ENCODE measurements at regions of chr13 and their contacts with region 1.

Region 1: DNA sequence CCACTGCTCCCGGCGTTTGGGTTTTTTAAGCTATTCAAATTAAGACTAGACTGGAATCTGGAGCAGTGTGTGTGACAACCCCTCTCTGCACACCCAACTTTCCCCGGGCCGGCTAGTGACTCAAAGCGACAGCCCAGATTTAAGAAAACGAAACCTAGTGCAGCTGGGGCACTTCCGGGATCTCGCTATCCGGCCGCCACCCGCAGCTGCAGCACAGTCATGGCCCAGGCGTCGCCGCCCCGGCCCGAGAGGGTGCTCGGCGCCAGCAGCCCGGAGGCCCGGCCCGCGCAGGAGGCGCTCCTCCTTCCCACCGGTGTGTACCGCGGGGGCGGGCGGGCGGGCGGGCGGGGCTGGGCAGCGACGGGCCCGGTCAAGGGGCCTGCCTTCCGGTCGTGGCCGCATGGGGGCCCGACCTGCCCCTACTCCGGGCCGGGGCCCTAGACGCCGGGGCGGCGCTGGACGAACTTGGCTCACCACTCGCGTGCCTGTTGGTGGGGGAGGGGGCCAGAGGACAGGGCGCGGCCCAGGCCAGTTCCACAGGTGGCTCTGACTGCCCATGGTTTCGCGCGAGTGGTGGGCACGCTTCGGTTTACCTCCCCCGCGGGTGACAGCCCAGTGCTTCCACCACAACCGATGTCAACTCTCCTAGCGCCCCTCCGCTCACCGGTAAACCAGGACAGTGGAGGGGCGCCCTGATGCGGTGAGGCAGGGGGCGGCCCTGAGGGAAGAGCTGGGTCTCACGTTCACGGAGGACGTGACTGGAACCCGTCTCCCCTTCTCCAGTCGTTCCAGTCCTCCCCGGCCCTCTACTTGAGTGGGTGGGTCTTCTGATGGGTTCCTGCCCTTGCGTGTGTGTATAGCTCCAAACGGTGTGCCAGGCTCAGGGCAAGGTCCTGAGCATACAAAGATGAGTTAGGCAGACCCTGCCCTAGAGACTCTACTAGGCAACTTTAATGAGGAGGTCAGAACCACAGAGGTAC is at the start of gene PHF11:
- DNase-seq: peak; percentile 45 to 92
- H3K4me3 ChIP-seq: peak within 1 kb of the TSS; percentile 71 to 74
- H3K27ac ChIP-seq: peak within 1 kb of the TSS; percentile 95 to 99
- H3K4me1 ChIP-seq: peaks cover 0 to 3% of the 10 kb centered on the region in 2 donors
- H3K27me3 ChIP-seq: no peaks in the 10 kb centered on the region
- CTCF ChIP-seq: peak in 1 of 3 experiments; percentile 3
- total RNA-seq, gene PHF11: 57.4 TPM

Region 2: GRCh38 chr13:49308089-49308875 is 187.8 kb before region 1 on chr13:
- intact Hi-C with region 1: loop called (anchors 5 kb)
- DNase-seq: peak; percentile 58 to 94
- H3K4me3 ChIP-seq: peak overlapping the region; percentile 16 to 21
- H3K27ac ChIP-seq: peak overlapping the region; percentile 92 to 95
- H3K4me1 ChIP-seq: peaks cover 6 to 34% of the 10 kb centered on the region in 2 donors
- H3K27me3 ChIP-seq: no peaks in the 10 kb centered on the region
- CTCF ChIP-seq: peak in 1 of 3 experiments; percentile 6

Region 3: DNA sequence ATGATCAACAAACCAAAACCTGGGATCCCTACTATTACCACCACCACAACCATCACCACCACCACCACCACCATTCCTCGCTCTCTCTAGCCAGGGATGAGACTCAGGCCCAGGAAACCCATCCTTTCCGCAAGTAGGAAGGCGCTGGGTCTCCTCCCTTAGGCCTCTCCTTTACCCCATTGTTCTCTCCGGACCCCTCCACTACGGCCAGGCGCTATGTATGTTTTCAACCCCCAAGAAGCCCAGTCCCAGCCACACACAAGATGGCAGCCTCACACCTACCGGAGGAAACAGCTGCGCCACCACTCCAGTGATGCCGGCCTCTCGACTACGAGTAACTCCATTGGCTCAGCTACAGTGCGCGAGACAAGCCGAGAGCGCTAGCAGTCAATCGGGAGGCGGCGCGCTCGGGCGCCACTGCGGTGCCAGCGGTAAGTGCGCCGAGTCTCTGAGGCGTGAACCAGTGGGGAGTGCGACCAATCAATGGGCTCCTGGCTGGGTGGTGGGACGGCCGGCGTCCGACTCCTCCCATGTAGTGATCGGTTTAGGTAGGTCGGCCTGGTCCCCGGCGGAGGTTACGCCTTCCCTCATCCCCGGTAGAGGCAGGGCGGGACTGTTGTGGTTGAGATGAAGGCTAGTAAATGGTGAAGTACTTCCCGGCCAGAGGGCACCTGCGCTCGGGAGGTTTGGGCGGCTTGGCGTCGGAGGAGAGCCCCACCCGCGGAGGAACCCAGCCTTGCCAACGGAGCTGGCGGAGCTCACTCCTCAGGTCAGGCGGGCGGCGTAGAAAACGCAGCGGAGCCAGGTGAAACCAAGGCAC is 52.2 kb before region 1 on chr13 and contains the starts of genes CAB39L and SETDB2:
- intact Hi-C with region 1: loop called (anchors 1 kb)
- DNase-seq: peak; percentile 99 to 100
- H3K4me3 ChIP-seq: peak within 1 kb of the TSS; percentile 75 to 84
- H3K27ac ChIP-seq: peak within 1 kb of the TSS; percentile 96 to 99
- H3K4me1 ChIP-seq: peaks cover 2 to 20% of the 10 kb centered on the region in 2 donors
- H3K27me3 ChIP-seq: no peaks in the 10 kb centered on the region
- CTCF ChIP-seq: peak; percentile 26 to 45 (median 42)
- total RNA-seq, gene CAB39L: 30.1 TPM
- total RNA-seq, gene SETDB2: 7.2 TPM

Region 4: DNA sequence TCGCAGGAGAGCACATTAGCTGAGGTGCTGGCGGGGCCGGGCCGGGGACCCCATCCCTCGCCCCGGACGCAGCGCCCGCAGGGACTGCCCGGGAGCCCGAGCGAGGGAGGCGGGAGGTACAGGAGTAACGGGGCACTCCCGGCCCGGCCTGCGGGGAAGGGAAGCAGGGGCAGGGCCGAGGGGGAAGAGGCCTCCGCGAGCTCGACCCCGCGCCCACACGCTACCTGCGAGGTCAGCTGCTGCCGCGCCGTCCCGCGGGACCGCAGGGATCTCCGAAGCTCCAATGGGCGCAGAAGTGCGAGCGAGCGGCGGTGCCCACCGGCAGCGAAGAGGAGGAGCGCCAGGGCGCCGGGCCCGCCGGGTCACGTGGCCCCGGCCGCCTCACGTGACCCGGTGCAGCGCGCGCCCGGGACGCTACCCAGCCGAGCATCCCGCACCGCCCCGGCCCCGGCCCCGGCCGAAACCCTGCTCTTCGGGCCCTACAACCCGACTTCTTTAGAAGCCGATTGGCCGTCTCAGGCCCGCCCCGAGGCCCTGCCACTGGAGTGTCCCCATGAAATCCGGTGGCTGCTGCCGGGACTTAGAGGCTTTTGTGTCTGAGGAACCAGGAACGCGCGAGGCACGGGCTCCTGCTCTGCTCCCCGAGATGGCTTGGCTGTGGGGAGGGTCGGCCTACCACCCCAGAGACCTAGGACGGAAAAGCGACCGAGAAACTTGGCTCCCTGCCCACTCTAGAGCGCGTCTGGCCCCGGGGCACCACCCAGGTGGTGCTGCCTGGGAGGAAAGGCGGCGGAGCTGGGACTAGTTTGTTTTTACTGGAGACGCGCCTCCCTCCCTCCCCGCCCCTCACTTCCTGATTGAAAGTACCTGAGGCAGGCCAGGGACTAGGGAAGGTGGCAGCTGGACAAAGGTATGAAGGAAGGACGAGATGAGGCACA is 89.4 kb after region 1 on chr13 and contains the start of gene RCBTB1:
- intact Hi-C with region 1: loop called (anchors 5 kb)
- DNase-seq: peak in 1 of 2 donors; percentile 81
- H3K4me3 ChIP-seq: peak within 1 kb of the TSS; percentile 73 to 92
- H3K27ac ChIP-seq: peak within 1 kb of the TSS; percentile 71 to 72
- H3K4me1 ChIP-seq: peaks cover 0 to 15% of the 10 kb centered on the region in 2 donors
- H3K27me3 ChIP-seq: no peaks in the 10 kb centered on the region
- CTCF ChIP-seq: no peak
- total RNA-seq, gene RCBTB1: 2.0 TPM

Region 5: GRCh38 chr13:49606747-49607648 is 110.9 kb after region 1 on chr13:
- intact Hi-C with region 1: loop called (anchors 2 kb)
- DNase-seq: peak; percentile 53 to 94
- H3K4me3 ChIP-seq: peak overlapping the region; percentile 11 to 57
- H3K27ac ChIP-seq: no peak overlapping the region
- H3K4me1 ChIP-seq: no peaks in the 10 kb centered on the region
- H3K27me3 ChIP-seq: no peaks in the 10 kb centered on the region
- CTCF ChIP-seq: peak; percentile 53 to 78 (median 71)

Region 6: GRCh38 chr13:49759503-49759902 is 263.4 kb after region 1 on chr13:
- intact Hi-C with region 1: no loop called
- DNase-seq: no peak
- H3K4me3 ChIP-seq: no peak overlapping the region
- H3K27ac ChIP-seq: no peak overlapping the region
- H3K4me1 ChIP-seq: no peaks in the 10 kb centered on the region
- H3K27me3 ChIP-seq: no peaks in the 10 kb centered on the region
- CTCF ChIP-seq: no peak